ENCODE measurements at regions of chr4 and their contacts with region 1.

Region 1: GRCh38 chr4:77618383-77619122 is 12.9 kb downstream of the CXCL13 start:
- DNase-seq: peak; percentile 58
- H3K4me3 Mint-ChIP-seq: no peak overlapping the region
- H3K27ac Mint-ChIP-seq: no peak overlapping the region
- H3K4me1 Mint-ChIP-seq: peaks cover 3% of the 10 kb centered on the region
- H3K27me3 Mint-ChIP-seq: peaks cover 35% of the 10 kb centered on the region

Region 2: DNA sequence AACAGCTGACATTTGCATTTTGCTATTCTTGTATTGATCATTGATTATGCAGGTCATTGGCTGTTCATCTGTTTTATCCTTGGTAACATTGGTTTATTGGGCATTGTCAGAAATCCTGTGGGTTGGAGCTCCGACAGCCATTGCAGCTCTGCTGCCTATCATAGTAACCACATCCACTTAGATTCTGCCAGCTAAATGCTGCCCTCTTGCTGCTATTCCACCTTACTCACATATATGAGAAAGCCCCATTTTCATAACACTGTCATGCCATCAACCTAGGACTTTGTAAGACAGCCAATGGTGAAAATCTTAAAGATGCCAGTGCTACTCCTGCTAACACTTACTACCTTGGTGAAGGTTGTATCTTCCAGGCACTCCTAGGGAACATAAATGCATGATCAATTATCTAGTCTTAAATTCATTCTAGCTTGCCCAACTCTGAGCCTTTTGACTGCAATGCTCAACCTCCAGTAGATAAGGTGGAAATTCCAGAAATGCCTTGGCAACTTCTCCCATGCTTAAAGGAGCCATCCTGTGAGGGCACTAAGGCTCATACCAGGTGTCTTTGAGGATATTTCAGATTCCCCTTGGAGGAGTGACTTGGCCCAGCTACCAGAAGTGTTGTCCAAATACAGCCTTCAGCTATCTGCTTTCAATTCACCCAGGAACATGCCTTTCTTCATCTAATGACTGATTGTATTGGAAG is 200.1 kb before region 1 on chr4:
- CTCF ChIA-PET with region 1: no interaction called
- POLR2A ChIA-PET with region 1: no interaction called
- DNase-seq: no peak
- H3K4me3 Mint-ChIP-seq: no peak overlapping the region
- H3K27ac Mint-ChIP-seq: no peak overlapping the region
- H3K4me1 Mint-ChIP-seq: no peaks in the 10 kb centered on the region
- H3K27me3 Mint-ChIP-seq: peaks cover 11% of the 10 kb centered on the region

Region 3: DNA sequence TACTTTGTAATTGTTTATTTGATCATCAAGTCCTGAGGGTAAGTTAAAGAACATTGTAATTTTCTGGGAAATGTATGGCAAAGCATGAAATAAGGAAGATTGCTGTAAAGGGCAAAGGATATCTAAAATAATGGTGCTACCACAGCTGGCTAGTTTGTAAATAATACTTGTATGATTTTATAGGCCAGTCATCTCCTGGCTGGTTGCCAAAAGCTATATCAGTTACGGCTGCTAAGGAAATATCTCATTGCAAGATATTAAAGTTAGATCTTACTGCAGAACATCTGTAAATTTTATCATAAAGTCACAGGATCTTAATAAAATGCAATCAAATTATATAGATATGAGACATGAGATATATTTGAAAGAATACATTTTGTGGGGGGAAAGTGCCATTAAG is 163.7 kb before region 1 on chr4:
- CTCF ChIA-PET with region 1: no interaction called
- POLR2A ChIA-PET with region 1: no interaction called
- DNase-seq: no peak
- H3K4me3 Mint-ChIP-seq: no peak overlapping the region
- H3K27ac Mint-ChIP-seq: no peak overlapping the region
- H3K4me1 Mint-ChIP-seq: no peaks in the 10 kb centered on the region
- H3K27me3 Mint-ChIP-seq: peaks cover 2% of the 10 kb centered on the region

Region 4: DNA sequence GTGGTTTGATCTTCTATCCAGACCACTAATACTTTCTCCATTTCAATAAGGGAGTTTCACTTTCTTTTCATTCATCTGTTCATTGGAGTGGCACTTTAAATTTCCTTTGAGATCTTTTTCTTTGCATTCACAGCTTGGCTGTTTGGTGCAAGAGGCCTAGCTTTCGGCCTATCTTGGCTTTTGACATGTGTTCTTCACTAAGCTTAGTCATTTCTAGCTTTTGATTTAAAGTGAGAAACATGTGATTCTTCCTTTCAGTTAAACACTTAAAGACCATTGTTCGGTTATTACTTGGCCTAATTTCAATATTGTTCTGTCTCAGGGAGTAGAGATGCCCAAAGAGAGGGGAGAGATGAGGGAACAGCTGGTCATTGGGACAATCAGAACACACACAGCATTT is 11.3 kb after region 1 on chr4:
- CTCF ChIA-PET with region 1: interaction called, 18 read pairs
- POLR2A ChIA-PET with region 1: no interaction called
- DNase-seq: no peak
- H3K4me3 Mint-ChIP-seq: no peak overlapping the region
- H3K27ac Mint-ChIP-seq: no peak overlapping the region
- H3K4me1 Mint-ChIP-seq: peaks cover 23% of the 10 kb centered on the region
- H3K27me3 Mint-ChIP-seq: peaks cover 2% of the 10 kb centered on the region

Region 5: GRCh38 chr4:77697860-77698590 is 79.5 kb after region 1 on chr4:
- CTCF ChIA-PET with region 1: no interaction called
- POLR2A ChIA-PET with region 1: no interaction called
- DNase-seq: no peak
- H3K4me3 Mint-ChIP-seq: no peak overlapping the region
- H3K27ac Mint-ChIP-seq: no peak overlapping the region
- H3K4me1 Mint-ChIP-seq: no peaks in the 10 kb centered on the region
- H3K27me3 Mint-ChIP-seq: peaks cover 19% of the 10 kb centered on the region